Posterior vena cava (tissue), 2 donors: ENCODE measurements at regions of chr10 and their contacts with region 1.

Region 1: GRCh38 chr10:122216047-122216446 is 55.0 kb upstream of the BTBD16 start:
- DNase-seq: no peak

Region 2: GRCh38 chr10:122199070-122199469 is 17.0 kb before region 1 on chr10:
- intact Hi-C with region 1: no loop called
- DNase-seq: no peak

Region 3: DNA sequence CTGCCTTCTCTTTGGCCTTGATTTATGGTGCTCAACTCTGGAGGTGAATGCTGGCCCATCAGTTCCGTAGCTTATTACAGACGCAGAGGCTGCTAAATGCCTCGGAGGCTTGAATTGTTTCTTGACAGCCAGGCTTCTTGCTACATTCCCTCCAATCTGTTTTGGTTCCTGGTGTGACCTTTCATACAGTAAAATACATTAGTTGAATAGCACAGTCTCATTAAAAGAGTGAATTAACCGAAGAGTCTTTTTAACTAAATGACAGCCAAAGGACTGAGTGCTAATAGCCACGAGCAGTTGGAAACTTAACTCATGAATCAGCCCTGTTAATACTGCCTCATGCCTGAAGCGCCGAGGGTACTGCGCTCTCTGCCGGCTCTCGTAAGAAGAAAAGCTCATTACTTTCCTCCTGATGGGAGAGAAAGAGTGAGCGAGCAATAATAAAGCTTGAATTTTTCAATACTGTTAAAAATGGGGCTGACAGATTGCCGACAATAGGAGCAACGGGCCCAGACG is 1213.7 kb after region 1 on chr10:
- intact Hi-C with region 1: loop called in 1 of 2 experiments (anchors 5 kb)
- DNase-seq: no peak